ENCODE measurements at regions of chr14 and their contacts with region 1.

Region 1: DNA sequence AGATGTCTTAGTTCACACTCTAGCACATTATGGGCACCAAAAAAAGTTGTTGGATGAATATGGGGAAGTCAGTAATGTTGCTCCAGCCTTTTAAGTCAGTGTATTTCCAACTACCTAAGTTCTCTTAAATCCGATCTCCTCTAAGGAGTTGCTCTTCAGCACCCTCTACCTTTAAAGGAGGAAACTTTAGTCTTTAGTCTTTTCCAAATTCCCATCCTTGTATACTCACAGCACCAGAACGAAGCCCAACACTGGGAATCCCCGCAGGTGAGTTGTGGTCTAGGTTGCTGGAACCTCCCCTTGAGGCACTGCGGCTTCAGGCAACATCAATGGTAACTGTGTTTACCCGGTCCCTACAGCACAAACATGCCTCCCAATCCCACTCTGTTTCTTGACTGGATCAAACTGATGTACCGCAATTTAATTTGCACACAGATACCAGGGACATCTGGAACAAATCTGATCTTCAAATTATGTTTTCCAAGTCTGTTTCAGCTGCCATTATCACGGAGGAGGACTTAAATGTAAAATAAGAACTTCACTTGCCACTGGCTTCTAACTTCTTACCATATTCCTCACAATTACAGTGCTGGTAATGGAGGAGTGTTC is 179.0 kb downstream of the FOXN3 start:
- DNase-seq: no peak
- H3K4me3 ChIP-seq: no peak overlapping the region
- H3K27ac ChIP-seq: no peak overlapping the region
- H3K4me1 ChIP-seq: peaks cover 0 to 5% (median 1%) of the 10 kb centered on the region in 4 experiments; a peak in 2 of 7 replicates
- H3K27me3 ChIP-seq: no peaks in the 10 kb centered on the region
- CTCF ChIP-seq: peak in 1 of 3 experiments; percentile 56; a peak in 2 of 4 replicates
- EP300 ChIP-seq: no peak
- POLR2A ChIP-seq: no peak
- RAD21 ChIP-seq: peak; percentile 44 to 49

Region 2: DNA sequence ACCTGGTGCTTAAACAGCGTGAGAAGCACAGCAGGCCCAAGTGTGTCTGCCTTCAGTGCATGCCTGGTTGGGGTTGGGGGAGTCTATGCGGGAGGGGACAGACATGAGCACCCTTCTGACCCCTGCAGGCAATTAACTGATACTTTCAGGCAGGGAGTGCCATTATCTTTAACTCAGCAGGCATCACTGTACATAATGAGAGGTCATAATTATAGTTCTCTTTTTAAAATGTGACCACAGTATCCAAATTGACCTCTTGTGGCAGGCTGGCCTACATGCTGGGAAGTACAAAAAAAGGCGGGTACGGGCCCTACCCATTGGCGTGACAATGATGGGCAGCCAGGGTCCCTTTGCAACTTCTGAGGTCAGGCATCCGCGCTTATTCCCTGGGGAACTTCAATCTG is 30.1 kb before region 1 on chr14:
- CTCF ChIA-PET with region 1: no interaction called
- POLR2A ChIA-PET with region 1: no interaction called
- DNase-seq: no peak
- H3K4me3 ChIP-seq: no peak overlapping the region
- H3K27ac ChIP-seq: no peak overlapping the region
- H3K4me1 ChIP-seq: peaks cover 9 to 17% (median 16%) of the 10 kb centered on the region in 4 experiments
- H3K27me3 ChIP-seq: no peaks in the 10 kb centered on the region
- CTCF ChIP-seq: peak in 1 of 3 experiments; percentile 23; a peak in 1 of 4 replicates
- EP300 ChIP-seq: no peak
- POLR2A ChIP-seq: no peak
- RAD21 ChIP-seq: no peak; a peak in 1 of 4 replicates

Region 3: DNA sequence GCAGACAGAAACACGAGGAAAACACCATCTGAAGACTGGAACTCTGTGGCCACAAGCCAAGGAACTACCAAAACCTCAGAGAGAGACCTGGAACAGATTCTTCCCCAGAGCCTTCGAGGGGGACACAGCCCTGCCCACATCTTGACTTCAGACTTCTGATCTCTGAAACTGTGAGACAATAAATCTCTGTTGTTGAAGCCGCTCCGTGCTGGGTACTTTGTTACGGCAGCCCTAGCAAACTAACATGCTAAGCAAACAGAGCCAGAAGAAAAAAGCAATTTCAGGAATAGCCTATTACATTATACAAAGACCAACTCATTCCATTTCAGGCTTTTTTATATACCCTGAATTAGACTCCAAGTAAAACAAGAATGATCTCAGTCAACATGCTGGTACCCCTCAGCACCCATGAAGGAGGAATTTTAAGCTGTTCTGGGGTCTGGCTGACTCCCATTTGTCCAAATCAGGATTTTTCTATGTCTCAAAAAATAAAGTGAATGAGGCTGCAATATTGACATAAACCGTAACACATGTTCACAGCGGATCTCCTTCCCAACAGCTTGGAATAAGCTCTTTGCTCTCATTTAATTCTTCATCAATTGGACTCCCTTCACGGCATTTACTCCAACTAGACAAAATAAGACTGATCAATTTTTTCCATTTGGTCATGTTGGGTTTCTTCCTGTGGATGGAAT is 11.1 kb before region 1 on chr14:
- CTCF ChIA-PET with region 1: interaction called, 18 read pairs
- POLR2A ChIA-PET with region 1: interaction called, 3 read pairs
- DNase-seq: no peak
- H3K4me3 ChIP-seq: no peak overlapping the region
- H3K27ac ChIP-seq: no peak overlapping the region
- H3K4me1 ChIP-seq: peaks cover 0 to 4% (median 3%) of the 10 kb centered on the region in 4 experiments; a peak in 3 of 7 replicates
- H3K27me3 ChIP-seq: no peaks in the 10 kb centered on the region
- CTCF ChIP-seq: no peak
- EP300 ChIP-seq: no peak
- POLR2A ChIP-seq: no peak
- RAD21 ChIP-seq: no peak